ENCODE measurements at regions of chr14 and their contacts with region 1.

Region 1: GRCh38 chr14:64510825-64511671 is 6.5 kb downstream of the ZBTB1 start:
- DNase-seq: no peak
- H3K4me3 ChIP-seq: no peak overlapping the region
- H3K27me3 ChIP-seq: no peaks in the 10 kb centered on the region
- CTCF ChIP-seq: peak; percentile 90

Region 2: GRCh38 chr14:64293976-64294671 is 216.9 kb before region 1 on chr14 and contains the start of gene ESR2:
- CTCF ChIA-PET with region 1: no interaction called
- POLR2A ChIA-PET with region 1: no interaction called
- DNase-seq: no peak
- H3K4me3 ChIP-seq: peak within 1 kb of the TSS; percentile 23
- H3K27me3 ChIP-seq: peaks cover 16% of the 10 kb centered on the region
- CTCF ChIP-seq: peak; percentile 42; the same call in 1 of the 2 replicates
- polyA plus RNA-seq, gene ESR2: not detected in 2 replicates

Region 3: GRCh38 chr14:64531567-64531966 is 20.5 kb after region 1 on chr14:
- CTCF ChIA-PET with region 1: interaction called, 14 read pairs
- POLR2A ChIA-PET with region 1: no interaction called
- DNase-seq: no peak
- H3K4me3 ChIP-seq: no peak overlapping the region
- H3K27me3 ChIP-seq: no peaks in the 10 kb centered on the region
- CTCF ChIP-seq: no peak

Region 4: DNA sequence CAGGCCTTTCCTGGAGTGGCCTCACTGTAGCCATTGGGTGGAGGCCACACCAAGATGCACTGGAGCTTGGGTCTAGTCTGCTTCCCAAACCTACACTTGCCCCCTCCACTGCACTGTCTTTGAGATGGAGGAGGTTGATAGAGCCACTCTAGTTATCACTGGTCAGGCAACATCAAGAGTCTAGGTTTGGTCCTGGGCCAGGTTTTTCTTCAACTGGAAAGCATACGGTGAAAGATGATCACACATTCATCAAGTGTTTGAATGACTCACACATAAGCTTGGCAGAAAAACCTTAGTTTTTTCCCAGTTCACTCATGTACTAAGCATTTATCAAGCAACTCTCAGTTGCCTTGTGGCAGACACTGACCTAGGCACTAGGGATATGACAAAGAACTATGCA is 277.6 kb after region 1 on chr14:
- CTCF ChIA-PET with region 1: no interaction called
- POLR2A ChIA-PET with region 1: no interaction called
- DNase-seq: peak; percentile 87
- H3K4me3 ChIP-seq: no peak overlapping the region
- H3K27me3 ChIP-seq: no peaks in the 10 kb centered on the region
- CTCF ChIP-seq: no peak